Heart right ventricle (tissue), 16 donors: ENCODE measurements at regions of chr11 and their contacts with region 1.

Region 1: DNA sequence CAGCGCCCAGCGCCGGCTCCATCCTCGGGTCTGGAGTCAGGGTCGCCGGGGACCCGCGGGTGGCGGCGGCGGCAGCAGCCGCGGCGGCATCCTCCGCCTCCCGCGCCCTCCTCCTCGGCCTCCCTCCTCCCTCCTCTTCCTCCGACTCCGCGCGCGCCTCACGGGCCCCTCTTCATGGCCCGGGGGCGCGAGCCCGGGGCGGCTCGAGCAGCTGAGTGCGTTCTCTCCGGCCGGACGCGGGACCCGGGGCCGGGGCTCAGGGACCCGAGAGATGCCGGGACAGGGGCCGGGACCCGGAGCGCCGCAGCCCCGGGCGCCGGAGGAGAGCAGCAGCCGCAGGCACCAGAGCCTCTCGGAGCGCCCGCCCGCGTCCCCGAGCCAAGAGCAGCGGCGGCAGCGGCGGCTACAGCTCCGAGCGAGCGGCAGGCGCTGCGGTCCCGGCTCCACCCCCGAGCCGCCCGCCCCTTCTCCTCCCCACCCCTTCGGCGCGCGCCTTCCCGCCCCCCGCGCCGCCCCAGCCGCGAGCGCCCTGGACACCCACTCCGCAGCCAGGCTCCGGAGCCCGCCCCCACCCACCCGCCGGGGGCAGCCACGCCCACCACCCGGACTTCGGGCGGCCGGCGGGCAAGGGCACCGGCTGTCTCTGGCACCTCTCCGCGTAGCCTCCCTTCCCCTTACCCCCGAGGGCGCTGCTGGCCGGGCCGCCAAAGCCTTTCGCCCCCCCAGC is at the start of gene CHST1:
- DNase-seq: peak; percentile 42 to 80
- ATAC-seq: peak; percentile 64 to 88 (median 70)
- H3K4me3 ChIP-seq: peak within 1 kb of the TSS; percentile 66 to 94 (median 72)
- H3K27ac ChIP-seq: peak within 1 kb of the TSS in 8 of 10 donors; percentile 22 to 82 (median 60)
- H3K4me1 ChIP-seq: peaks cover 3 to 48% (median 36%) of the 10 kb centered on the region in 9 donors
- H3K27me3 ChIP-seq: peaks cover 0 to 72% (median 11%) of the 10 kb centered on the region in 7 donors
- CTCF ChIP-seq: no peak
- total RNA-seq, gene CHST1: 0.53 to 7.7 (median 1.5) TPM

Region 2: GRCh38 chr11:44621140-44621681 is 1044.2 kb before region 1 on chr11:
- intact Hi-C with region 1: no loop called
- DNase-seq: peak; percentile 76 to 83
- ATAC-seq: peak; percentile 62 to 82 (median 70)
- H3K4me3 ChIP-seq: peak overlapping the region in 6 of 10 donors; percentile 10 to 39 (median 33)
- H3K27ac ChIP-seq: no peak overlapping the region
- H3K4me1 ChIP-seq: peaks cover 12 to 54% (median 37%) of the 10 kb centered on the region in 9 donors
- H3K27me3 ChIP-seq: no peaks in the 10 kb centered on the region
- CTCF ChIP-seq: peak; percentile 97 to 99 (median 98)

Region 3: DNA sequence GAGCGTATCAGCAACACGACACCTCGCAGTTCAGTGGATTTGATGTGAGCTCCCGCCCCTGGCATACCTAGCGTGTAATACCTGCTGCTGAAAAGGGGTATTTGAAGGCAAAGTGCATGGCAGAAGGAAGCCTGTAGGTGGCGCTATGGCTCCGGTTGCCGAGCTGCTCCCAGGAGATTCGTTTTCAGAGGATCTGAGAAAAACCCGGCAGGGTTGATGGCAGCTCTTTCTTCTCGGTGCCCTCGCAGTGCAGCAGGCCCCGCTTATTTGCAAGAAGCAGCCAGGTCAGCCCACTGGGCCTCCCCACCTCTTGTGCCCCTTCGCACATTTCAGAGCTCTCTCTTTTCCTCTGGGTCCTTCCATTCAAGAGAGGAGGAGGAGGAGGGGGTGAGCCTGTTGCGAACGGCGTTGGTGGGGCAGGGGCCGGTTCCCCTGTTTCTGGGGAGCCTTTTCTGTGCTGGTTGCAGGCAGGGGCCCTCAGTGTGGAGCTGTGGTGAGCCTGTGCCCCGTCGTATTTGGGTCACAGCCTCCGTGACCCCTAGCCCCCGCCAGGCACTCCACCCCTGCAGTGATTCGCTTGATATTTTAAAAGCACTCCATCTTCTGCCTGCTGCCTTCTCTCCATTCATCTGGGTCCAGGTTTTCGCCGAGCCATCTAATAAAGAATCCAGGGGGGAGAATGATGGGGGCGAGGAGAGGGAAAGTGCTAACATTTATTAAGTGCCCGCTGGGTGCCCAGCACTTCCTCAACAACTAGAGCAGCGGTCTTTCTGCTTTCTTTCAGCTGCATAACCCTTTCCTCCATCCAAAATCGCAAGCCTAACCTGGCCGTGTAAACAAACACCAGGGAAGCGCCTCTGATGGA is 293.9 kb before region 1 on chr11:
- intact Hi-C with region 1: loop called in 1 of 10 experiments (anchors 10 kb)
- DNase-seq: peak; percentile 48 to 61
- ATAC-seq: peak in 7 of 8 donors; percentile 44 to 79 (median 59)
- H3K4me3 ChIP-seq: peak overlapping the region in 2 of 10 donors; percentile 7 to 28
- H3K27ac ChIP-seq: no peak overlapping the region
- H3K4me1 ChIP-seq: peaks cover 0 to 15% (median 5%) of the 10 kb centered on the region in 9 donors
- H3K27me3 ChIP-seq: peaks cover 0 to 40% (median 14%) of the 10 kb centered on the region in 7 donors
- CTCF ChIP-seq: peak; percentile 83 to 94 (median 90)

Region 4: GRCh38 chr11:45617871-45618601 is 47.3 kb before region 1 on chr11:
- intact Hi-C with region 1: no loop called
- DNase-seq: no peak
- ATAC-seq: peak in 7 of 8 donors; percentile 20 to 61 (median 42)
- H3K4me3 ChIP-seq: no peak overlapping the region
- H3K27ac ChIP-seq: peak overlapping the region in 1 of 10 donors; percentile 52
- H3K4me1 ChIP-seq: peaks cover 0 to 21% (median 0%) of the 10 kb centered on the region in 9 donors
- H3K27me3 ChIP-seq: peaks cover 0 to 12% (median 0%) of the 10 kb centered on the region in 7 donors
- CTCF ChIP-seq: no peak

Region 5: DNA sequence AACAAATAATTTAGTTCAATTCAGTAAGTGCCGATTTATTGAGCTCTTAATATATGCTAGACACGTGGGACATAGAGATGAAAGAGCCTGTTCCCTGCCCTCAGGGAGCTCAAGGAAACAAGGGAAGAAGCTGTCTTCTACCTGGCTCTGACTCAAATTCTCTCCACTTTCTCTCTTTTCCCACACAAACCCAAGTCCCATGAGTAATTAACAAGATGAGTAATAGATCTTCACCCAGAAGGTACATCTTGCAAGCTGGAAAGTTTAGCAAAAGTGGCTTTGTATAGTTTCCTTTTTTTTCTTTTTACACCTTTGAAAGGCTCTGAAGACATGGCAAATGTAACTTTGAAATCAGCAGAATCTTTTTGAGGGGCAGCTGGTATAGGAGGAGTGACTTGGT is 48.2 kb after region 1 on chr11:
- intact Hi-C with region 1: no loop called
- DNase-seq: no peak
- ATAC-seq: no peak
- H3K4me3 ChIP-seq: no peak overlapping the region
- H3K27ac ChIP-seq: no peak overlapping the region
- H3K4me1 ChIP-seq: no peaks in the 10 kb centered on the region
- H3K27me3 ChIP-seq: peaks cover 0 to 20% (median 3%) of the 10 kb centered on the region in 7 donors
- CTCF ChIP-seq: no peak

Region 6: DNA sequence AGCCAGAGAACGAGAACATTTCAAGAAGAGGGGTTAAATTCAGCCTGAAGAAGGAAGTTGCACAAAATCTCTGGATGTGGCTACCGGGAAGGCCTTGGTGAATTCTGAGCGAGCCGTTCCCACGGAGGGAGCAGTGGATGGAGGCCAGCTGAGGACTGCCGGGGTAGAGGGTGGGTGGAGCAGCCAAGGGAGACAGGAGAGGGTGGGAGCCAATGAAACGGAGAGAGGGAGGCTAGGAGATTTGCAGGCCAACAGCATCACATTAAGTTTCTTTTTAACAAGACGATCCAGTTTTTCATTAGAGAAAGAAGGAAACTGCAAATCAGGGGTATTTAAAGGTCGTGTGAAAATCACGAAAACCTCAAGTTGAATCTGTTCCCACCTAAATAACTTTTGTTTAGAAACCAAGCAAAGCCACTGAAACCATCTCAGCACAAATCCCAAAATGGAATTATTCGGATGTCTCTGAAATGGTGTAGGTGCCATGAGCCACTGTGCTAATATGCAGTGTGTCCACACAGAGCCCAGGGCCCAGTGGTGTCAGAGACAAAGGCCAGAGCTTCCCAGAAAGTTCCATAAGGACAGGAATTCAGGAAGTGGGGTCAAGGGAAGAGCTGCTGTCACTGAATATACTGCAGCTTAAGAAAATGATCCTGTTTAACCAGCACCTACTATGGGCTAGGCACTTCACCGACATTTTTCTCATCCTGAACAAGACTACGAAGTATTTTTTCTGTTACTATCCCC is 79.9 kb after region 1 on chr11:
- intact Hi-C with region 1: loop called in 1 of 10 experiments (anchors 5 kb)
- DNase-seq: peak; percentile 75 to 77
- ATAC-seq: peak; percentile 82 to 95 (median 92)
- H3K4me3 ChIP-seq: no peak overlapping the region
- H3K27ac ChIP-seq: peak overlapping the region in 9 of 10 donors; percentile 28 to 74 (median 57)
- H3K4me1 ChIP-seq: peaks cover 0 to 31% (median 8%) of the 10 kb centered on the region in 9 donors
- H3K27me3 ChIP-seq: no peaks in the 10 kb centered on the region
- CTCF ChIP-seq: no peak

Region 7: DNA sequence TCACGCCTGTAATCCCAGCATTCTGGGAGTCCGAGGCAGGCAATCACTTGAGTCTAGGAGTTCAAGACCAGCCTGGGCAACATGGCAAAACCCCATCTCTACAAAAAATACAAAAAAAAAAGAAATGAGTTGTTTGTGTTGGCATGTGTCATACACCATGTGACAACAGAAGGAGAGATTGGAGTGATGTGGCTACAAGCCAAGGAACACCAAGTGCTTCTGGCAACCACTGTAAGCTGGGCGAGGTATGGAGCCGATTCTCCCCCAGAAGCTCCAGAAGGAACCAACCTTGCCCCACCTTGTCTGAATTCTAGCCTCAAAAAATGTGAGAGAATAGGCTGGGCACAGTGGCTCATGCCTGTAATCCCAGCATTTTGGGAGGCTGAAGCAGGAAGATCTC is 100.5 kb after region 1 on chr11:
- intact Hi-C with region 1: loop called in 1 of 10 experiments (anchors 5 kb)
- DNase-seq: no peak
- ATAC-seq: no peak
- H3K4me3 ChIP-seq: no peak overlapping the region
- H3K27ac ChIP-seq: no peak overlapping the region
- H3K4me1 ChIP-seq: peaks cover 0 to 4% (median 0%) of the 10 kb centered on the region in 9 donors
- H3K27me3 ChIP-seq: no peaks in the 10 kb centered on the region
- CTCF ChIP-seq: no peak